Activated CD4-positive, alpha-beta T cell treated with anti-CD3 and anti-CD28 coated beads, Interleukin-2, amount 10 ng/mL, durations not matched to agents 24 days and 14 days (primary cell): ENCODE measurements at regions of chrX and their contacts with region 1.

Region 1: GRCh38 chrX:151082076-151082948 is 94.1 kb upstream of the GPR50 start:
- DNase-seq: peak; percentile 86
- H3K4me3 Mint-ChIP-seq: no peak overlapping the region
- H3K27ac Mint-ChIP-seq: no peak overlapping the region
- H3K4me1 Mint-ChIP-seq: peaks cover 1% of the 10 kb centered on the region
- H3K27me3 Mint-ChIP-seq: peaks cover 22% of the 10 kb centered on the region

Region 2: GRCh38 chrX:150772150-150772970 is 310.0 kb before region 1 on chrX:
- intact Hi-C with region 1: loop called (anchors 1 kb)
- DNase-seq: peak; percentile 92
- H3K4me3 Mint-ChIP-seq: no peak overlapping the region
- H3K27ac Mint-ChIP-seq: no peak overlapping the region
- H3K4me1 Mint-ChIP-seq: peaks cover 2% of the 10 kb centered on the region
- H3K27me3 Mint-ChIP-seq: no peaks in the 10 kb centered on the region

Region 3: DNA sequence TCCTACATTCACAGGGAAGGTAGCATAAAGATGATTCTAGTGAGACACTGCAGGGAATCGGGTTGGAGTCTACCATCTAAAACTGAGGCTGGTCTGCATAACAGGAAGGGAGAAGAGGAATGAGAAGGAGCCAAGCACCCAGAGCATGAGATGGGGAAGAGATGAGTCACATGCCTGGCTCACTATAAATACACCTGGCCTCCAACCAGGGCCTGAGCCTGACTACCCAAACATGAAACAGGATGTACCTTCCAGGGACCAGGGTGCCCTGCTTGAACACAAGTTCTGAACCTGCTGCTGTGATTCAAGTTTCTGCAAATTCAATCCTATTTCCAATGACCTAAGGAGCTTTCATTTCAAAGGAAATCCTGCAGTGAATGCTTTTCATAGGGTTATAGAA is 208.7 kb before region 1 on chrX:
- intact Hi-C with region 1: loop called (anchors 10 kb)
- DNase-seq: no peak
- H3K4me3 Mint-ChIP-seq: no peak overlapping the region
- H3K27ac Mint-ChIP-seq: no peak overlapping the region
- H3K4me1 Mint-ChIP-seq: peaks cover 24% of the 10 kb centered on the region
- H3K27me3 Mint-ChIP-seq: no peaks in the 10 kb centered on the region